Aorta (tissue), 5 donors: ENCODE measurements at regions of chr2 and their contacts with region 1.

Region 1: GRCh38 chr2:32356735-32357644 is at the start of gene BIRC6:
- DNase-seq: peak; percentile 99 to 100
- ATAC-seq: peak; percentile 99
- H3K4me3 ChIP-seq: peak within 1 kb of the TSS; percentile 85 to 91
- H3K27ac ChIP-seq: peak within 1 kb of the TSS; percentile 92 to 93
- H3K4me1 ChIP-seq: peaks cover 0 to 6% of the 10 kb centered on the region in 2 donors
- H3K27me3 ChIP-seq: no peaks in the 10 kb centered on the region
- total RNA-seq, gene BIRC6: 102 to 137 TPM

Region 2: DNA sequence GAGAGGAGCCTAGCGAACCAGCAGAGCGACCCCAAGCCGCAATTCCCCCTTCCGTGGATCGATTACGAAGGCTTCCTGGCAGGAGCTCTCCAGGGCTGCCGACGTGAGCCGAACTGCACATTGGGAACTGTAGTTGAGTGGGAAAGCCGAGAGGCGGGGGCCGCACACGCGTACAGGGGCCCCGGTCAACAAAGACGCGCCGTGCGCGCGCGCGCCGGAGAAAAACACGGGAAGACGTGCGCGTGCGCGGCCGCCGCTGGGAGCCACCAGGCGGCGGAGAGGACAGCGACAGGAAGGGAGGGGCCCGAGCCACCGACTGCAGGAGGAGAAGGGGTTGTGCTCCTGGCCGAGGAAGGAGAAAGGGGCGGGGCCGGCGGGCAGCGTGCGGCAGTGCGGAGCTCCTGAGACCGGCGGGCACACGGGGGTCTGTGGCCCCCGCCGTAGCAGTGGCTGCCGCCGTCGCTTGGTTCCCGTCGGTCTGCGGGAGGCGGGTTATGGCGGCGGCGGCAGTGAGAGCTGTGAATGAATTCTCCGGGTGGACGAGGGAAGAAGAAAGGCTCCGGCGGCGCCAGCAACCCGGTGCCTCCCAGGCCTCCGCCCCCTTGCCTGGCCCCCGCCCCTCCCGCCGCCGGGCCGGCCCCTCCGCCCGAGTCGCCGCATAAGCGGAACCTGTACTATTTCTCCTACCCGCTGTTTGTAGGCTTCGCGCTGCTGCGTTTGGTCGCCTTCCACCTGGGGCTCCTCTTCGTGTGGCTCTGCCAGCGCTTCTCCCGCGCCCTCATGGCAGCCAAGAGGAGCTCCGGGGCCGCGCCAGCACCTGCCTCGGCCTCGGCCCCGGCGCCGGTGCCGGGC is 293.5 kb before region 1 on chr2 and contains the start of gene SPAST:
- intact Hi-C with region 1: loop called in 1 of 2 experiments (anchors 10 kb)
- DNase-seq: peak; percentile 98 to 99
- ATAC-seq: peak; percentile 98
- H3K4me3 ChIP-seq: peak within 1 kb of the TSS; percentile 90 to 92
- H3K27ac ChIP-seq: peak within 1 kb of the TSS; percentile 34 to 69
- H3K4me1 ChIP-seq: peaks cover 0 to 2% of the 10 kb centered on the region in 2 donors
- H3K27me3 ChIP-seq: no peaks in the 10 kb centered on the region
- total RNA-seq, gene SPAST: 13.5 to 18.2 TPM

Region 3: DNA sequence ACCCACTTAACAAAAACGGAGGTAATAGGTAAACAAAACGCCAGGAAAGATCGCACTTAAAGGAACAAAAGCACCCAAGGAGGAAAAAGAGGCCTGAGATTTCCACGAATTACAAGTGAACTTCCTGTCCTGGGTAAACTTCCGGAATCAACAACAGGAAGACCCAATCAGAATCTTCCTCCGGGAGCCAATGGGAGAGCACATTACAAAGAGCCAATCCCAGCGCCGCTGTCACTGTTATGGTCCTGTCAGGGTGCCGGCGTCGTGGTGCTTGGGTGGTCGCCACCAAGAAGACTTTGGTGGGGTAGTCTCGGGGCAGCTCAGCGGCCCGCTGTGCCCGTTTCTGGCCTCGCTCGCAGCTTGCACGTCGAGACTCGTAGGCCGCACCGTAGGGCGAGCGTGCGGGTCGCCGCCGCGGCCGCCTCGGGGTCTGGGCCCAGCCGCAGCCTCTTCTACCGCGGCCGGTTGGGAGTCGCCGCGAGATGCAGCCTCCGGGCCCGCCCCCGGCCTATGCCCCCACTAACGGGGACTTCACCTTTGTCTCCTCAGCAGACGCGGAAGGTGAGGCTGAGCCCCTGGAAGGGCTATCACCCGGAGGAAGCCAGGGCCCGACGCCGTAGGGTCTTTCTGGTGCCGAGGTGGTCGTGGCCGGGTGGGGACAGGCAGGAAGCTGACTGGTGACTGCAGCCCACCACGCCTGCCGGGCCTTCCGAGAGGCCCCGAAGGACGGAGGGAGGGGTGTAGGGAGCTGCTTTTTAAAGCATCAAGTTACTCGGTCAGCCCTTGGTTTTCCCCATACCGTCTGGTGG is 79.1 kb before region 1 on chr2 and contains the start of gene YIPF4:
- intact Hi-C with region 1: loop called in 1 of 2 experiments (anchors 2 kb)
- DNase-seq: peak; percentile 89 to 94
- ATAC-seq: peak; percentile 96
- H3K4me3 ChIP-seq: peak within 1 kb of the TSS; percentile 65 to 100
- H3K27ac ChIP-seq: peak within 1 kb of the TSS; percentile 12 to 78
- H3K4me1 ChIP-seq: peaks cover 0 to 1% of the 10 kb centered on the region in 2 donors
- H3K27me3 ChIP-seq: no peaks in the 10 kb centered on the region
- total RNA-seq, gene YIPF4: 35.4 to 57.9 TPM

Region 4: DNA sequence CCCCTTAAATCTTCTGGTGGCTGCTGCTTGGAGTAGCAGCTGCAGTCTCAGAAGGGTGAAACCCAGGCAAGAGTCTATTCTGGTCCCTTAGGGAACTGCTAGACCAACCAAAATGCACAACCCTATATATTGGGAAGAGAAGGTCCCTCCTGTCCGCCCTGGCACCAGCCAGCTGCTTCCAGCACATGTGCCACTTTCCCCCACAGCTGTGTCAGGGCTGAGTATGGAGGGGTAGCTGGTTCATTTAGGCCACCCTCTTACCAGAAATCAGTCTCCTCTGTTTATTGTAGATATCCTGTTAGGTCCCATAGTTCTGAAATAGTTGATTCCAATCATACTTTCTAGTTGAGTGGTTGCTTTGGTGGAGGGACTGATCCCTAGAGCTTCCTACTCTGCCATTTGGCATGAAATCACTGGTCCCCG is 68.7 kb after region 1 on chr2:
- intact Hi-C with region 1: loop called in 1 of 2 experiments (anchors 5 kb)
- DNase-seq: peak in 1 of 2 donors; percentile 53
- ATAC-seq: no peak
- H3K4me3 ChIP-seq: peak overlapping the region in 1 of 2 donors; percentile 26
- H3K27ac ChIP-seq: peak overlapping the region in 1 of 2 donors; percentile 80
- H3K4me1 ChIP-seq: no peaks in the 10 kb centered on the region
- H3K27me3 ChIP-seq: no peaks in the 10 kb centered on the region

Region 5: GRCh38 chr2:32478889-32479623 is 122.1 kb after region 1 on chr2:
- intact Hi-C with region 1: loop called in 1 of 2 experiments (anchors 5 kb)
- DNase-seq: no peak
- ATAC-seq: no peak
- H3K4me3 ChIP-seq: no peak overlapping the region
- H3K27ac ChIP-seq: no peak overlapping the region
- H3K4me1 ChIP-seq: no peaks in the 10 kb centered on the region
- H3K27me3 ChIP-seq: no peaks in the 10 kb centered on the region